Head of caudate nucleus (tissue), 42 donors: ENCODE measurements at regions of chr17 and their contacts with region 1.

Region 1: DNA sequence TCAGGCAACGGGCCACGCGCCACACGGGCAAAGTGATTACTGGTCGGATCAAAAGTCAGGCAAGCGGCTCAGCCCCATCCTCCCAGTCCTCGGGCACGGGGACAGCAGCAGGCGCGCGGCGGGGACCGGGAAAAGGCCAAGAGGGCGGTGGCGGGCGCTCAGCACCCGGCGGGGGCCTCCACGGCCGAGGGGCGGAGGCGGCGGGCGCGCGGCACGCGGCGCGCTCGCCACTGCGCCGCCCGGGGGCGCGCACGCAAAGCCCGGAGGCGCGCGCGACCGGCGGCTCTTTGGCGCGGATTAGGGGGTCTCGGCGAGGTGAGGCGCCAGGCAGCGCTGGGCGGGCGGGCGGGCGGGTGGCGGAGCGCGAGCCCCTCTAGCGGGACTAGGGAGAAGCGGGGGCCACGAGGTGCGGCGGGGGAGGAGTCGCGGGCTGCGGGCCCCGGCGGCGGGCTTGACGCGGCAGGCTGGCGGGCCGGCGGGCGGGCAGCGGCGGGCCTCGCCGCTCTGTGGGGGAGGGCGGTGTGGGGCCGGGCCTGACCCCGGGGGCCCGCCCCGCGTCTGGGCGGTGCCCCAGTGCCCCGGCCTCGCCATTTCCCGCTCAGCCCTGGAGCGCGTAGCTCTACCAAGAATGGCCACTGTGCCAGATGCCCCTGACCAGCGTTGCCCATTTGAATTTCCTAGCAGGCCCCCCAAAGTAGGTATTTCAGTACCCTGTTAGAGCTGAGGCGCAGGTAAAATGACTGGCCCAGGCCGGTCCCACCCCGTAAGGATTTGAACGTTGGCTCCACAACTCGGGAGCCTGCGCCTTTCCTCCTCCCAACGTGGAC is at the starts of genes ACACA and TADA2A:
- DNase-seq: peak; percentile 40 to 89 (median 74)

Region 2: DNA sequence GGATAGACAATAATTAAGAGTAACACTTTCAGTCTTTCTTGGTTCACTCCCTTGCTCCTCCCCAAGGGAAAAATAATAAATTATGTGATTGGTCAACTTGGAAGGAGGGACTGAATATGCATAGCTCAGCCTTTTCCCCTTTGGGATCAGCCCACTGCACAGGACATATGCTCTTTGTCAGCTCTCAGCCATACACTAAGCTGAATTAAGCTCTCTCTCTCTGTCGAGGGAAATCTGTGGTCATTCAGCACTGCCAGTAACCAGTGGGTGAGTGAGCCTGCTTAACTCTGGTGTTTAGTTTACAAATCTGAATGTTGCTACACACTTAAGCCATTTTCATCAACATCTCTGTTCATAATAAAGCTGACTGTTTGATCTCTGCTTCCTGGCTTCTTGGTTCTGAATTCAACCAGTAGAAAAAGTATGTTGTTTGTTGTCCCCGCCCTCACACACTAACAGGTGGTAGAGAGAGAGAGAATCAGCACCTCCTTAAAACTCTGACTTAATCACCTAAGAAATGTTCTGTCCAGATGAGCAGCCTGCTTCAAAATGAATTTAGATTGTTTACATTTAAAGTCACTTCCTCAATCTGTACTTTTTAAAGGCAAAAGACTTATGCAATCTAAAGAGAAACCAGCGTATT is 133.3 kb before region 1 on chr17:
- intact Hi-C with region 1: no loop called
- DNase-seq: no peak

Region 3: DNA sequence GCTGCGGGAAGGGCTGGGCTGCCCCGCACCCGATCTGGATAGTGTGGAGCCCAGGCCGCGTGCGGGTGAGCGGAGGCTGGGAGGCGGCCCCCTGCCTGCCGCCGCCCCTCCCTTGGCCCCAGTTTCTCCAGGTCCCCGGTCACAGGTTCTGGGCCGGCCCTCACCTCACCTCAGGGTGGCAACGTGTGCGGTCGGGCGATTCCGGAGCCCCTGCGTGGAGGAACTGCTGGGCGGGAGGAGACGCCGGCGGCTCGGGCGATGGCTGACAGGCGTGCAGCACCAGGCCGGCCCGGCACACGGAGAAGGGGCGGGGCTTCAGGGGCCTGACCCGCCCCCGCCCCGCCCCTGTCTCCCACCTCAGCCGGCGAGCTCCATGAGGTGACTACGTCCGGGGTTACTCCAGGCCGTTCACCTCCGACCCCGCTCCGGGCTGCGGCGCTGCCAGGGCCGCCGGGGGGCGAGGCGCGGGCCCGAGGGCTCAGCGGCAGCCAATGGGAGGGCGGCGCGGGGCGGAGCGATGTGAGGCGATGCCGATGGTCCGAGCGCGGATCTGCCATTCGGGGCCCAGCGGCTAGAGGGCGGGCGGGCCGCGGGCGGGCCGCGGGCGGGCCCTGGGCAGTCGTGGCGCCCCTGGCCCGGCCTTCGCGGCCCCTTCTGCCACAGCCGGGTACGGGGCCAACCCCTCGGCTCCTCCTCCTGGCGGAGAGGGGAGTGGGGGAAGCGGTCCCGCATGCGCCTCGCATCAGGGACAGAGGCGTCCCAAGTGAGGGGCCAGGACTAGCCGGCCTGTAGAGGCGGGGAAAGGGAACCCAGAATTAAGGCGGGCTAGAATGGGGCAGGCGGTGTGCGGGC is 47.8 kb before region 1 on chr17:
- intact Hi-C with region 1: loop called (anchors 5 kb)
- DNase-seq: peak; percentile 82 to 97 (median 94)

Region 4: GRCh38 chr17:37373530-37374159 is 33.2 kb before region 1 on chr17:
- intact Hi-C with region 1: loop called (anchors 5 kb)
- DNase-seq: peak in 41 of 42 donors; percentile 42 to 87 (median 72)

Region 5: DNA sequence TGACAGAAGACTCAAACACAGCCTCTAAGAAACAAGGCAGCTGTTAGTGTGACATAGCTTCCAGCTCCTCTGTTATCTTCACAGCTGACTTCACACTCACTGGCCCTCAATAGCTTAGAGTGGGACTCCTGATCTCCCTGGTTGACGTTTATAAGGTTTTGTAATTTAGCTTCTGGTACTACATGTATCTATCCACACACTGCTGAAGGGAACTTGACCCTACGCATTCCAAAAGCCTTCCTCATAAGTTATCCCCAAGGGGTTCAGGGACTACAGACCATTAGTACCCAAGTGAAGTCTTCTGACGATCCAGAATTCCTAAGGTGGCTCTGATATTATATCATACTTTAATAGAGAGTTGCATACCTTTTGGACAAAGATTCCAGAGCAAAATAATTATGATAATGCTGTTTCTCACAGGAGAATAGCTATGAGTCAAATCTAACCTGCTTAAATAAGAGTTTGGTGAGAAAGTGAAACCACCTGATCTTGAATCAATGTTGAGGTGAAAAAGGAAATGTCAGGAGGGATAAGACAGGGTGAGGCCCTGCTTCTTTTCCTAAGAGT is 14.7 kb before region 1 on chr17:
- intact Hi-C with region 1: no loop called
- DNase-seq: no peak

Region 6: DNA sequence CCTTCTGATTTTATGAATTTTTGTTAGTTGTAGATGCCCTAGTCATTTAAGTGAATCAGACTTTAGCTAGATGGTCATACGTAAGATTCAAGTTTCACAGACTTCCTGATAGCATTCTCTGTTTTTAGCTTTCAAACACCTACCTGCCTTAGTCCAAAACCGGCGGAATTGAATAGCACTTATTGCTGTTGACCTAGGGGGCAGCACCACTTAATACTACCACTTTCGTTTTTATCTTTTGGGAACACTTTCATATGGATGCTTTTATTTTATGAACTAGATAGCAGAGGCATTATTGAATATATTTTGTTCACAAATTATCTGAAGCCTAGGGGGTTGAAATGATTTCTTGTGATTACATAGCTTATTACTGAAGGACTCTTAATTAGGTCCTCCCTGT is 31.3 kb after region 1 on chr17:
- intact Hi-C with region 1: no loop called
- DNase-seq: peak in 1 of 42 donors; percentile 29